ENCODE measurements at regions of chr22 and their contacts with region 1.

Region 1: GRCh38 chr22:21867528-21868266 is at the start of gene MAPK1:
- DNase-seq: peak; percentile 96
- H3K4me3 ChIP-seq: peak within 1 kb of the TSS; percentile 79 to 94 (median 86)
- H3K27ac ChIP-seq: peak within 1 kb of the TSS; percentile 86 to 93 (median 90)
- H3K4me1 ChIP-seq: peaks cover 0 to 44% (median 32%) of the 10 kb centered on the region in 4 donors
- H3K27me3 ChIP-seq: no peaks in the 10 kb centered on the region
- CTCF ChIP-seq: peak in 1 of 4 experiments; percentile 30
- EP300 ChIP-seq: no peak
- POLR2A ChIP-seq: peak; percentile 41 to 66
- total RNA-seq, gene MAPK1: 44.1 to 73.2 (median 48.6) TPM

Region 2: DNA sequence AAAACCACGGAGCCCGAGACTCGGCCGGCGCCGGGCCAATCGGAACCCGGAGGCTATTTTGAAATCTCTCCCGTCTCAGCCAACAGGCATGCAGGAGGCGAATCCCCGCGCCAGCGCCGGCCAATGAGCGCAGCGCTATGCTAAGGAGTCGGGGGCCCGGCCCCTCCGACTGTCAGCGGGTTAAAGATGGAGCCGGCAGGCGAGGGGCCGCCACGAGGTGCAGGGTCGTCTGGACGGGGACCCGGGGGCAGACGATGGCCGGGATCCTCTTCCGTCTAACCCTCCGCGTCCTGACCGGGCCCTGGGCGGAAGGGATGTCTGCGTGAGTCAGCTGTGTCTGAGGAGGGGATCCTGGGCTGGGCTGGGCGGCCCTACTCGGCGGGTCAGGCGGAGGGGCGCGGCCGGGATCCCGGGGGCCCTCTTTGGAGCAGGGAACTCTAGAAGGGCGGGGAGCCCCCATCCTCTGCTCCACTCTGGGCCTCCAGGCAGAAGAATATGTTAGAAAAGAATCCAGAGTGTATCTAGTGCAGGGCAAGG is 215.6 kb before region 1 on chr22:
- intact Hi-C with region 1: no loop called
- DNase-seq: peak; percentile 94
- H3K4me3 ChIP-seq: peak overlapping the region; percentile 41 to 59 (median 50)
- H3K27ac ChIP-seq: peak overlapping the region in 2 of 4 donors; percentile 42 to 61
- H3K4me1 ChIP-seq: peaks cover 0 to 23% (median 16%) of the 10 kb centered on the region in 4 donors
- H3K27me3 ChIP-seq: peaks cover 2 to 37% (median 6%) of the 10 kb centered on the region in 3 donors
- CTCF ChIP-seq: no peak
- EP300 ChIP-seq: no peak
- POLR2A ChIP-seq: no peak

Region 3: DNA sequence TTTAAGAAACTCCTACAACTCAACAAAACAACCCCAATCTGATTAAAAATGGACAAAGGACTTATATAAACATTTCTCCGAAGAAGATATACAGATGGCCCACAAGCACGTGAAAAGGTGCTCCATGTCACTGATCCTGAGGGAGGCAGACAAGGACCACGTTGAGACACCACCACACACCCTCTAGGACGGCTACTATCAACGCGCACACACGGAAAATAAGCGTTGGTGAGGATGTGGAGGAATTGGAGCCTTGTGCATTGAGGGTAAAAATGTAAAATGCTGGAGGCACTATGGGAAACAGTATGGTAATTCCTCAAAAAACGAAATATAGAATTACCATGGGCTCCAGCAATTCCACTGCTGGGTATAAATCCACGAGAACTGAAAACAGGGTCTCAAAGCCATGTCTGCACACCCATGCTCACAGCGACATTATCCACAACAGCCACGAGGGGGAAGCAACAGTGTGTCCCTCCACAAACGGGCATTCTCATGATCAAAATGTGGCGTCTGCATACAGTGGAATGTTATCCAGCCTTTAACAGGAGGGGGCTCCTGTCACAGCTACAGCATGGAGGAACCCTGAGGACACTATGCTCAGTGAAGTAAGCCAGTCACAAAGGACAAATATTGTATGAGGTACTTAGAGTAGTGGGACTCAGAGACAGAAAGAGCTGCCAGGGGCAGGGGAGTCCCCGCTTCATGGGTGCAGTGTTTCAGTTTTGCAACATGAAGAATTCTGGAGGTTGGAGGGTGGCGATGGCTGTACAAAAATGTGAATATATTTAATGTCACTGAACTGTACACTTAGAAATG is 154.6 kb before region 1 on chr22:
- intact Hi-C with region 1: loop called (anchors 5 kb)
- DNase-seq: no peak
- H3K4me3 ChIP-seq: peak overlapping the region in 2 of 4 donors; percentile 7 to 14
- H3K27ac ChIP-seq: peak overlapping the region; percentile 0 to 54 (median 19)
- H3K4me1 ChIP-seq: peaks cover 0 to 15% (median 6%) of the 10 kb centered on the region in 4 donors
- H3K27me3 ChIP-seq: no peaks in the 10 kb centered on the region
- CTCF ChIP-seq: peak; percentile 75 to 84 (median 82)
- EP300 ChIP-seq: no peak
- POLR2A ChIP-seq: no peak

Region 4: DNA sequence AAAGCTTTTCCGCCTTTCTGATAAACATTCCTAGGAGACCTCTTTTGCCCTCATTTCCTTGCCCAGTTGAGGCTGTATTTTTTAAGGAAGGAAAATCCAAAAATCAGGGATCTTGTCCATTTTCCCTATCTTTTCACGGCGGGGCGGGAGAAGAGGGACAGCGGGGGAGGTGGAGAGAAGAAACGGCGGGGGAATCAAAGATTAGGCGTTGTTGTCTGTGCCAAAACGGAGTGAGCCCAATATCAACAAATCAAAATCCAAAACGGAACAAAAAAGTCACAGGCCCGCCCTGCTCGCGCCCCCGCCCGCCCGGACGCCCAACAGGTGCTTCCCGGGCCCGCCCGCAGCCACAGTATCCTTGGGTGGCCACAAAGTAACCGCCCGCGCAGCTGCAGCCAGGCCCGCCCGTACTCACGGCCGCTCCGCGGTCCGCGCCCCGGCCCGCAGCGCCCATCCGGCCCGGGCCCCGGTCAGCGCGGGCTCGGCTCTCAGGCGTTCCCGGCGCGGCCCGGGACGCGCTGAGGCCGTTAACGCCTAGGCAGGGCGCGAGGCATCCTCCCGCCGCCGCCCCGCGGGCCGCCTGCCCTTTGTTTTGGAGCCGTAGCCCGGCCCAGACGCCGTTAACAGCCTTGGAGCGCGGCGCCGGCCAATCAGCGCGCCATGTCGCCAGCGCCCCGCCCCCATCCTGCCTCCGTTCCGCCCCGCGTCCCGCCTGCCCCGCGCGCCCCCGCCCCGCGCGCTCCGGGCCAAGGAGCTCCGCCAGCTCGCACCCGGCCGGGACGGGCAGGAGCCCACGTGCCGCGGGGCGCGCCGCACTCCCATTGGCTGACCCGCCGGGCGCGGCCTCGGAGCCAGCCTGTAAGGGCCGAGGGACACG is 132.3 kb before region 1 on chr22 and contains the start of gene YPEL1:
- intact Hi-C with region 1: loop called (anchors 1 kb)
- DNase-seq: peak; percentile 98
- H3K4me3 ChIP-seq: peak within 1 kb of the TSS; percentile 38 to 78 (median 60)
- H3K27ac ChIP-seq: peak within 1 kb of the TSS; percentile 79 to 86 (median 83)
- H3K4me1 ChIP-seq: peaks cover 0 to 19% (median 12%) of the 10 kb centered on the region in 4 donors
- H3K27me3 ChIP-seq: no peaks in the 10 kb centered on the region
- CTCF ChIP-seq: no peak
- EP300 ChIP-seq: no peak
- POLR2A ChIP-seq: peak; percentile 12
- total RNA-seq, gene YPEL1: 5.9 to 9.6 (median 7.9) TPM

Region 5: GRCh38 chr22:21849489-21849888 is 18.2 kb before region 1 on chr22:
- intact Hi-C with region 1: no loop called
- DNase-seq: no peak
- H3K4me3 ChIP-seq: no peak overlapping the region
- H3K27ac ChIP-seq: peak overlapping the region in 3 of 4 donors; percentile 4 to 70 (median 12)
- H3K4me1 ChIP-seq: peaks cover 0 to 50% (median 27%) of the 10 kb centered on the region in 4 donors
- H3K27me3 ChIP-seq: no peaks in the 10 kb centered on the region
- CTCF ChIP-seq: no peak
- EP300 ChIP-seq: no peak
- POLR2A ChIP-seq: no peak

Region 6: GRCh38 chr22:21938071-21938822 is 70.5 kb after region 1 on chr22:
- intact Hi-C with region 1: loop called (anchors 1 kb)
- DNase-seq: peak; percentile 97
- H3K4me3 ChIP-seq: peak overlapping the region; percentile 39 to 64 (median 61)
- H3K27ac ChIP-seq: peak overlapping the region; percentile 94 to 96 (median 94)
- H3K4me1 ChIP-seq: peaks cover 0 to 73% (median 58%) of the 10 kb centered on the region in 4 donors
- H3K27me3 ChIP-seq: no peaks in the 10 kb centered on the region
- CTCF ChIP-seq: peak; percentile 93 to 100 (median 100)
- EP300 ChIP-seq: no peak
- POLR2A ChIP-seq: no peak

Measured in sigmoid colon (tissue), 7 donors.